HepG2 (cell line): ENCODE measurements at regions of chr11 and their contacts with region 1.

Region 1: DNA sequence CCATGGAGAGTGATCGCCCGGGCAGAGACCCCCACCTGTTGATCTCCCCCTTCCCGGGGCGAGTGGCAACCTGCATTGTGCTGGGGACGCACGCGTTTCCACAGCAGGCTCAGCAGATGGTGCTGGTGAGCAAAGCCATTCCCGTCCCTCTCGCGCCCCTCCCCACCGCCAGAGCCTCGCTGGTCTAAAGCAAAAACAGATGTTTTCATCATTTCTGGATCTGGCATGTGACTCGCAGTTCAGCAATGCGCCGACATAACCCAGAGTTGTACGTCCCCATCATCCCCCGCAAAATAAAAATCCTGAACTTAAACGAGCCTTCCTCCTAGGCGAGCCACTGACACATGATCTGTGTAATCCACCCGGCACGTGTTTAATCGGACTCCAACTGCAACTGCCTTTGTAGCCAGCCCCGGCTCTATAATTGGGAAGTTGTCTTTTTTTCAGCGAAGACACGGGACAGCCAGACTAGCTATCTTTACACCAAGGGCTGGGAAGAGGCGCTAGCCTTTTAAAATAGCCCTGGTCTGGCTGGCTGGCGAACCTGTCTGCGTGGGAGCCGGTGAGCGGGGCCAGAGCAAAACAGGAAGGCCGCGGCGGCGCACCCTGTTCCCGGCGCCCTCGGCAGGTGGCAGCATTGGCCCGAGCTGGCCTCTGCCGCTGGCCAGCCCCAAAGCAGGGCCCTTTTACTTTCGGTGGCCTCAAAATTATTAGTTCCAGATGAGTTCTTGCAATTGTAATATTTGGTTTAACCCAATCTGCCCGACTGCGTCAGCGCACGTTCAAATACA is 203.0 kb upstream of the SORL1-AS1 start:
- DNase-seq: peak; percentile 69
- ATAC-seq: peak; percentile 93
- H3K4me3 ChIP-seq: peak overlapping the region; percentile 42 to 65 (median 56)
- H3K27ac ChIP-seq: peak overlapping the region; percentile 71
- H3K4me1 ChIP-seq: peaks cover 48% of the 10 kb centered on the region
- H3K27me3 ChIP-seq: peaks cover 0 to 6% of the 10 kb centered on the region in 2 experiments; a peak in 2 of 5 replicates
- CTCF ChIP-seq: peak; percentile 90
- EP300 ChIP-seq: no peak
- POLR2A ChIP-seq: no peak
- RAD21 ChIP-seq: peak; percentile 94

Region 2: GRCh38 chr11:121931748-121932352 is 276.1 kb after region 1 on chr11:
- CTCF ChIA-PET with region 1: no interaction called
- POLR2A ChIA-PET with region 1: interaction called, 4 read pairs
- in situ Hi-C with region 1: no loop called
- intact Hi-C with region 1: loop called (anchors 1 kb)
- DNase-seq: peak; percentile 99
- ATAC-seq: peak; percentile 98
- H3K4me3 ChIP-seq: peak overlapping the region in 1 of 3 experiments; percentile 6; a peak in 1 of 6 replicates
- H3K27ac ChIP-seq: peak overlapping the region; percentile 94
- H3K4me1 ChIP-seq: peaks cover 79% of the 10 kb centered on the region
- H3K27me3 ChIP-seq: no peaks in the 10 kb centered on the region
- CTCF ChIP-seq: 0 out of 2 replicates have a peak, but pooled peaks have one; percentile 4
- EP300 ChIP-seq: peak; percentile 82 to 98; a peak in 3 of 4 replicates
- POLR2A ChIP-seq: 0 out of 4 replicates have a peak, but pooled peaks of 1 of the 2 experiments have one; percentile 13
- RAD21 ChIP-seq: 0 out of 2 replicates have a peak, but pooled peaks have one; percentile 35

Region 3: DNA sequence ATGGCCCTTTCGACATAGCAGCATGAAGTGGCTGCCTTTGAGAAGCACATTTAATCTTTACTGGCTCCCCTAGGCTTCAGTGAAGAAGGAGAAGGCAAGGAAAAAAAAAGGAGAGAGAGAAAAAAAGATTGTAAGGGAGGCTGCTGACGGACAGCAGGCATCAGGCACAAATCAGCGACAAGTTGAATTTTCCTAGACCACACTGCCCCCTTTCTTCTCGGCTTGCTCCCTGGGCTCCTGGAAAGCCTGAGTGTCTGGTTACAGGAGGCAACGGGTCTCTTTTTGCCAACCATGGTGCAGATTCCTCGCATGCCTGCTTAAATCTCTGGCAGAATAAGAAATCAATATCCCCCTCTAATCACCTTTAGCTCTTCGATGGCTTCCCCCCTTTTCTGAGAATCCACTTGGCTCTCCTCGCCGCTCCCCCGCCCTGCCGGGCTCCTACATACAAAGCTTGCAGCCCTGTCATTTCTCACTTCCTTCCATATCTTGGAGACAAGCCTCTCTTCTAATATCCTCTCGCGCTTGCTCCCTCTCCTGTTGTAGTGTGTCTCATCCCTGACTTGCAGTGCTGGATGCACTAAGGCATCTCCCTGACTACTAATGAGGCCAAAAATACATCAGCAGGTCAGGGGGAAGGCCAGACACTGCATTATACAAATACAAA is 446.0 kb after region 1 on chr11:
- CTCF ChIA-PET with region 1: interaction called, 9 read pairs
- POLR2A ChIA-PET with region 1: no interaction called
- in situ Hi-C with region 1: no loop called
- intact Hi-C with region 1: loop called (anchors 1 kb)
- DNase-seq: peak; percentile 20
- ATAC-seq: peak; percentile 76
- H3K4me3 ChIP-seq: no peak overlapping the region
- H3K27ac ChIP-seq: no peak overlapping the region
- H3K4me1 ChIP-seq: no peaks in the 10 kb centered on the region
- H3K27me3 ChIP-seq: no peaks in the 10 kb centered on the region
- CTCF ChIP-seq: peak; percentile 60
- EP300 ChIP-seq: no peak
- POLR2A ChIP-seq: no peak
- RAD21 ChIP-seq: no peak; the same call in 1 of the 2 replicates

Region 4: DNA sequence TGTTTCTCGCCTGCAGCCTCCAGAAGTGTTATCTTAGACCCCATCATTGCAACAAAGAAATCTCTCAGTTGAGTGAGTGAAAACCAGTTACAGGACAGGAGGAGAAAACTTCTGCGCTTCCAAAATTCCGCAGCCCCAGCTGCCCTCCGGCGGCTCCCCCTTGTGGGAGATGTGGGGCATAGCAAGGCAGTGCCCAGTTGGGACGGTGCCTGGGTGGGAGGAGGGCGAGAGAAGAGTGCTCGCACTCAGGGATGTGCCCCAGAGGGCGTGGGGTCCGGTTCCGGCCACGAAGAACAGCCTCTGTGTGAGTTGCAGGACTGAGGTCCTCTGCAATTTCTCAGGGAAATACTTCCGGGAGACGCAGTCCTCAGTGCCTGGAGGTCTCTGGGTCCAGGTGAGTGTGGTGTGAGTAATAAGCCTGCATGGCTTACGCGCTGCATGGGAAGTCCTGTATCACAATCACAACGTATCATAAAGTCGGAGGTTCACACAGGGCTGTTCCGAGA is 547.3 kb after region 1 on chr11:
- CTCF ChIA-PET with region 1: interaction called, 45 read pairs
- POLR2A ChIA-PET with region 1: no interaction called
- in situ Hi-C with region 1: loop called (anchors 5 kb)
- intact Hi-C with region 1: no loop called
- DNase-seq: peak; percentile 17
- ATAC-seq: peak; percentile 98
- H3K4me3 ChIP-seq: no peak overlapping the region
- H3K27ac ChIP-seq: no peak overlapping the region
- H3K4me1 ChIP-seq: peaks cover 19% of the 10 kb centered on the region
- H3K27me3 ChIP-seq: peaks cover 0 to 8% of the 10 kb centered on the region in 2 experiments; a peak in 1 of 5 replicates
- CTCF ChIP-seq: peak; percentile 87
- EP300 ChIP-seq: no peak
- POLR2A ChIP-seq: no peak
- RAD21 ChIP-seq: peak; percentile 82

Region 5: GRCh38 chr11:122367809-122368231 is 712.1 kb after region 1 on chr11:
- CTCF ChIA-PET with region 1: no interaction called
- POLR2A ChIA-PET with region 1: no interaction called
- in situ Hi-C with region 1: no loop called
- intact Hi-C with region 1: loop called (anchors 1 kb)
- DNase-seq: peak; percentile 76
- ATAC-seq: peak; percentile 99
- H3K4me3 ChIP-seq: peak overlapping the region in 1 of 3 experiments; percentile 5; a peak in 1 of 6 replicates
- H3K27ac ChIP-seq: peak overlapping the region; percentile 26
- H3K4me1 ChIP-seq: peaks cover 18% of the 10 kb centered on the region
- H3K27me3 ChIP-seq: no peaks in the 10 kb centered on the region
- CTCF ChIP-seq: no peak
- EP300 ChIP-seq: no peak
- POLR2A ChIP-seq: no peak
- RAD21 ChIP-seq: no peak